Activated T-helper 2 cell treated with anti-CD3 and anti-CD28 coated beads, Interferon-gamma antibody, Interleukin-2, Interleukin-4, amounts not matched to agents 10 μg/mL and 5 μg/mL and 100 μg/mL, durations not matched to agents 14 hours and 24 hours and 36 hours (primary cell): ENCODE measurements at regions of chr10 and their contacts with region 1.

Region 1: GRCh38 chr10:22251751-22252223 is 34.0 kb upstream of the EBLN1 start:
- DNase-seq: peak; percentile 59
- H3K4me3 Mint-ChIP-seq: peak overlapping the region; percentile 94
- H3K27ac Mint-ChIP-seq: peak overlapping the region; percentile 100
- H3K4me1 Mint-ChIP-seq: peaks cover 30% of the 10 kb centered on the region
- H3K27me3 Mint-ChIP-seq: peaks cover 16% of the 10 kb centered on the region

Region 2: DNA sequence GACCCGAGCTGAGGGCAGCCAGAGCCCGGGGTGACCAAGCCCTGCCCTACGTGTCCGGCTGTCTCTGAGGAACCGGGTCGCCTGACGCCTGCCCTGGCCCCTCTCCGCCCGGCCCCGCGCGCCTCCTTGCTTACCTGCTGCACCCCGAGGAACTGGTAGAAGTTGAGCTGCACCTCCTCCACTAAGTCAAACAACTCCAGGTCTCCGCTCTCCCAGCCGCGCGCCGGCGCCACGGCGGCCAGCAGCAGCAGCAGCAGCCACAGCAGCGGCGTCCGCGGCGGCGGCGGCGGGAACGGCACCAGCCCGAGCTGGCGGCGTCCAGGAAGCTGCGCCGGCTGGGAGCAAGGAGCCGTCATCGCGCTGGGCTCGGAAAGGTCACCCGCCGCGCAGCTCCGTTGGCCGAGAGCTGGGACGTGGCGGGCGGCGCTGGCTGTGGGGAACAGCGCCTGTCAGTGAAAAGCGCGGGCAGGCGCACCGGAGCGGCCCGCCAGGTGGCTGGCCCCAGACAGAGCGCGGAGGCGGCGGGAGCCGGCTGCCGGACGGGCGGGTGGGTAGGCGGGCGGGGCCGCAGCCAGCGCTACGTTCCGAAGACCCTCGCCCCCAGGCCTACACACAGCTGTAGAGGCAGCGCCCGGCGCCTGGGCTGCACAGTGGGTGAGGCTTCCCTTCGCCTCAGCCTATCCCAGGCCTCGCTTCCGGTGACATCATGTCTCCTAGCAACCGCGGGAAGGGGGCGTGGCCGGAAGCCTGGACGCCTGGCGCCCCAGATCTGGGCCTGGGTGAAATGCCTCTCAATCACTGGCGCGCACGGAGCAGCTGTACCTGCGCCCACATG is 248.5 kb before region 1 on chr10 and contains the start of gene DNAJC1:
- intact Hi-C with region 1: loop called (anchors 1 kb)
- DNase-seq: peak; percentile 96
- H3K4me3 Mint-ChIP-seq: peak within 1 kb of the TSS; percentile 96
- H3K27ac Mint-ChIP-seq: peak within 1 kb of the TSS; percentile 91
- H3K4me1 Mint-ChIP-seq: peaks cover 34% of the 10 kb centered on the region
- H3K27me3 Mint-ChIP-seq: peaks cover 12% of the 10 kb centered on the region
- total RNA-seq, gene DNAJC1: 24.0 and 24.5 TPM in 2 replicates

Region 3: GRCh38 chr10:22228943-22229801 is 22.6 kb before region 1 on chr10:
- intact Hi-C with region 1: loop called (anchors 1 kb)
- DNase-seq: peak; percentile 82
- H3K4me3 Mint-ChIP-seq: peak overlapping the region; percentile 88
- H3K27ac Mint-ChIP-seq: peak overlapping the region; percentile 82
- H3K4me1 Mint-ChIP-seq: peaks cover 18% of the 10 kb centered on the region
- H3K27me3 Mint-ChIP-seq: peaks cover 8% of the 10 kb centered on the region

Region 4: GRCh38 chr10:22316285-22317120 is 64.7 kb after region 1 on chr10 and contains the start of gene COMMD3:
- intact Hi-C with region 1: loop called (anchors 1 kb)
- DNase-seq: peak; percentile 79
- H3K4me3 Mint-ChIP-seq: peak within 1 kb of the TSS; percentile 88
- H3K27ac Mint-ChIP-seq: peak within 1 kb of the TSS; percentile 88
- H3K4me1 Mint-ChIP-seq: peaks cover 40% of the 10 kb centered on the region
- H3K27me3 Mint-ChIP-seq: peaks cover 1% of the 10 kb centered on the region
- total RNA-seq, gene COMMD3: 92.1 and 105 TPM in 2 replicates

Region 5: DNA sequence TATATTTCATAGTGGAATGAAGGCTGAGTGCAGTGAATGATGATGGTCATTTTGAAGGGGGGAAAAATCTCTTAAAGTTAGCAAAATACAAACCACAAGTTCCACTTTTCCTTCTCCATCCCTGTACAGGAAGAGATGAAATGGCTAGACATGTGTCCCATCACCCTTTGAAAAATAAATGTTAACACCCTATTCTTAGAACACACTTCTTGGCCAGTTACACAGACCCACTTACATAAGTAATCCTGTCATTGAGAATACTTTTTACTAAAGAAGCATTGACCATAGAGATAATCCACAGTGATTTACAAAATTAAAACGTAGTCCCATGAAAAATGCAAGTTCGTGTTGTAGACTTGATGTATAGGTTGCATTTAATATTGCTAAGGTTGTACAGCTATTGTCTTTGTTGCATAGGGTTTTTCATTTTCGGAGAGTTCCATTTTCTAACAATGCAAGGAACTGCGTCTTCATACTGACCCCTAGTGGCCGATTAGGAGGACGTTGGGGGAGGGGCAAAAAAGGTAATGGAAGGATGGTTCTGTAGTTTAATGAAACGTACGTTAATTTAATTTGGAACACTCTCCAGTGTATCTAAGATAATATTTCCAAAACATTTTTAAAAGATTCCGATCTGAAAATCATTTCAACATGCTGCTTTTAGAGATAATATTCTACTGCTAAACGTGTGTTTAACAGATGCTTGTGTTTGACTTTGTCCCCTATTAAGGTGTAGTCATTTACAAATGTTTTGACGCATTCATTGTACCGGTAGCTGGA is 737.0 kb after region 1 on chr10:
- intact Hi-C with region 1: loop called (anchors 5 kb)
- DNase-seq: peak; percentile 47
- H3K4me3 Mint-ChIP-seq: no peak overlapping the region
- H3K27ac Mint-ChIP-seq: no peak overlapping the region
- H3K4me1 Mint-ChIP-seq: peaks cover 14% of the 10 kb centered on the region
- H3K27me3 Mint-ChIP-seq: peaks cover 16% of the 10 kb centered on the region

Region 6: GRCh38 chr10:23095404-23095965 is 843.7 kb after region 1 on chr10 and contains the start of gene MSRB2:
- intact Hi-C with region 1: loop called (anchors 5 kb)
- DNase-seq: peak; percentile 66
- H3K4me3 Mint-ChIP-seq: peak within 1 kb of the TSS; percentile 88
- H3K27ac Mint-ChIP-seq: peak within 1 kb of the TSS; percentile 83
- H3K4me1 Mint-ChIP-seq: peaks cover 41% of the 10 kb centered on the region
- H3K27me3 Mint-ChIP-seq: peaks cover 17% of the 10 kb centered on the region
- total RNA-seq, gene MSRB2: 4.0 and 4.4 TPM in 2 replicates